A549 (cell line): ENCODE measurements at regions of chr16 and their contacts with region 1.

Region 1: GRCh38 chr16:19389246-19389645 is 28.4 kb upstream of the TMC5 start:
- DNase-seq: peak; percentile 43 to 68
- ATAC-seq: peak; percentile 82 to 86
- H3K4me3 ChIP-seq: no peak overlapping the region
- H3K27ac ChIP-seq: peak overlapping the region in 1 of 2 experiments; percentile 18; a peak in 1 of 6 replicates
- H3K4me1 ChIP-seq: peaks cover 25% of the 10 kb centered on the region
- CTCF ChIP-seq: peak; percentile 82
- EP300 ChIP-seq: no peak
- POLR2A ChIP-seq: no peak
- RAD21 ChIP-seq: peak; percentile 81 to 83

Region 2: GRCh38 chr16:19375561-19376158 is 13.6 kb before region 1 on chr16:
- CTCF ChIA-PET with region 1: interaction called, 12 read pairs
- POLR2A ChIA-PET with region 1: interaction called, 7 read pairs
- DNase-seq: peak; percentile 70 to 73
- ATAC-seq: peak; percentile 81 to 91; a peak in 5 of 6 replicates
- H3K4me3 ChIP-seq: no peak overlapping the region
- H3K27ac ChIP-seq: no peak overlapping the region
- H3K4me1 ChIP-seq: no peaks in the 10 kb centered on the region
- CTCF ChIP-seq: peak; percentile 98
- EP300 ChIP-seq: no peak
- POLR2A ChIP-seq: no peak
- RAD21 ChIP-seq: peak; percentile 98 to 99

Region 3: DNA sequence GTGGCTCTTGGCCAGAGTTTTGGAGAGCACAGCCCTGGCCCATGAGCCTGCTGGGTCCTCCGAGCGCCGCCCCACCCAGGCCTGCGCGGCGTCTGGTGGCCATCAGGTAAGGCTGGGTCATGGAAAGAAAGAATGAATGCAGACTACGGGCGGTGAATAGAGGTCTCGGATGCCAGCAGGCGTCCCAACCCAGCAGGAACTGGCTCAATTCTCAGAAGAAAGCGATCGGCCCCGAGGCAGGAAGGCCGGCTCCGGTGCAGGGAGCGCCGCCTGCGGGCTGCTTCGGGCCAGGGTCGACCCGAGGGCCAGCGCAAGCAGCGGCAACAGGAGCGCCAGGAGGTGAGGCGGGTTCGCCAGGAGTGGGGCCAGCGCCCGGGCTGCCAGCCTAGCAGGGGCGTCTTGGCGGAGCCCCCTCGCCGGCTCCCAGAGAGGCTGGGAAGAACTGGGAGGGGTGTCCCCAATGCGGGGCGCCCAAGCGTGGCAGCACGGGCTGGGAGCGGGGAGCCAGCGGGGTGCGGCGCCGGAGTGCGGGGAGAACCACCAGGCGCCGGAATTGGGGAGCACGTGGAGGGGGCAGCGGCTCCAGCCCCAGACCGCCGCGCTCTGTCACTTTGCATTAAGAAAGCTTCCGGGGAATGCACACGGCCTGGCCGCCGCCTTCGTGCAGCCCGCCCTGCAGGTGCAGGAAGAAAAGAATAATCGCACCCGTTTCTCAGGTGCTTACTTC is 21.4 kb after region 1 on chr16:
- CTCF ChIA-PET with region 1: interaction called, 12 read pairs
- POLR2A ChIA-PET with region 1: interaction called, 12 read pairs
- DNase-seq: peak; percentile 62 to 70
- ATAC-seq: peak; percentile 96
- H3K4me3 ChIP-seq: peak overlapping the region; percentile 59
- H3K27ac ChIP-seq: peak overlapping the region; percentile 86 to 95
- H3K4me1 ChIP-seq: peaks cover 35% of the 10 kb centered on the region
- CTCF ChIP-seq: peak; percentile 56
- EP300 ChIP-seq: no peak
- POLR2A ChIP-seq: peak; percentile 22; the same call in 1 of the 2 replicates
- RAD21 ChIP-seq: peak; percentile 43 to 71